Natural killer cell (primary cell): ENCODE measurements at regions of chr20 and their contacts with region 1.

Region 1: DNA sequence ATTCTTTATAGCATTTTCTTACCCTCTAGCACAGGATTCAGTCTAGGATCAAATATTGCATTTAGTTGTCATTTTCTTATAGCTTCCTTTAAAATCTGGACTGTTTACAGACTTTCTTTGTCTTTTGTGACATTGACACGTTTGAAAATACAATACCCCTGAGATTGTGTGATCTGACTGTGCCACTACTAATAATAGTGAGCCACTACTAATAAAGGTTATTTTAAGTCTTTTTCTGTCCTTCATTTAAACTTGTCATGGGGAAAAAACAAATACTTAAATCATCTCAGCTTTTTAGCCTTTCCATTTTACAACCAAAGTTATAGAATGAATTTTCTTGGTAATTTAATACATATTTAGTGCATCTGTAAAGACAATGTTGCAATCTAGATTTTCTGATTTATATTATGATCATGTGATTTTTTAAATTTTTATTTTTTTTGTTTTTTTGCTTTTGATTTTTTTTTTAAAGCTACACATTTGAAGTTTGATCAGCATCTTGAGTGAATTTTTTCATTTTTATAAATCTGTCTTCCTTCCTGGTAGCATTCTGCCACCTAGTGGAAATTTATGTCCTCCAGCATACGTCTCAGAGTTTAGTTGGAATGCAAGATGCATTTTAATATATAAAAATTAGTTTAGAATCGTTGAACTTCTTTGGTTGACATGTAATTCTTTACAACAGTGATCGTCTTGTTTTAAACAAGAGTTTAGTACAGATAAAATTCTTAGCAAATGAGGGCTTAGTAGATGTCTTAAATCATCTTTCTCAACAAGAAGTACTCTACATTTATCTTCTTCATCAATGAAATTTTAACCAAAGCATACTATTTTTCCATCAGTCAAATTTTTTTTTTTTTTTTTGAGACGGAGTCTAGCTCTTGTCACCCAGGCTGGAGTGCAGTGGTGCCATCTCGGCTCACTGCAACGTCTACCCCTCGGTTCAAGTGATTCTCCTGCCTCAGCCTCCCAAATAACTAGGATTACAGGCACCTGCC is 119.4 kb downstream of the NCOA3 start:
- DNase-seq: peak in 1 of 2 donors; percentile 73
- ATAC-seq: peak in 2 of 3 donors; percentile 44 to 45
- H3K4me3 ChIP-seq: no peak overlapping the region
- H3K4me3 Mint-ChIP-seq: no peak overlapping the region
- H3K27ac ChIP-seq: no peak overlapping the region
- H3K27ac Mint-ChIP-seq: peak overlapping the region; percentile 2 to 51
- H3K4me1 ChIP-seq: no peaks in the 10 kb centered on the region
- H3K4me1 Mint-ChIP-seq: peaks cover 7 to 11% of the 10 kb centered on the region in 2 donors
- H3K27me3 ChIP-seq: no peaks in the 10 kb centered on the region
- H3K27me3 Mint-ChIP-seq: no peaks in the 10 kb centered on the region
- CTCF ChIP-seq: peak; percentile 81

Region 2: DNA sequence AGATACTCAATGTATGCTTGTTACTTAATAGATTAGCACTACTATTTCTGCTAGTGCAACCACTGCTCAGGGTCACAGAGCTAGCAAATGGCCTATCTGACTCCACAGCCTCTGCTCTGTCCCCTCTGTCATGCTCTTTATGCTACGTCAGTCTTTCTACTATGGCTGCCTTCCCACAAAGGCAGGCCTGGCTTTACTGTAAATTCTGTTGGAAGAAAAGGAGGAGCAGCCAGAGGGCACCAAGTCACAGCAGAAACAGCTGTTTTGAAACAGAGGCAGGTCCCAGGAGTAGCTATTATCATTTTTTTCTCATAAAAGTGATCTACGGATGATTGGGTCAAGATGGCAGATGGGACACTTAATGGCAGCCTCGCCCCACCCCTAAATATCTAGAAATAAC is 1204.7 kb before region 1 on chr20:
- intact Hi-C with region 1: no loop called
- DNase-seq: no peak
- ATAC-seq: no peak
- H3K4me3 ChIP-seq: no peak overlapping the region
- H3K4me3 Mint-ChIP-seq: no peak overlapping the region
- H3K27ac ChIP-seq: no peak overlapping the region
- H3K27ac Mint-ChIP-seq: no peak overlapping the region
- H3K4me1 ChIP-seq: no peaks in the 10 kb centered on the region
- H3K4me1 Mint-ChIP-seq: no peaks in the 10 kb centered on the region
- H3K27me3 ChIP-seq: no peaks in the 10 kb centered on the region
- H3K27me3 Mint-ChIP-seq: peaks cover 7 to 21% of the 10 kb centered on the region in 2 donors
- CTCF ChIP-seq: no peak

Region 3: GRCh38 chr20:47196091-47197081 is 424.7 kb before region 1 on chr20:
- intact Hi-C with region 1: loop called (anchors 1 kb)
- DNase-seq: peak; percentile 31 to 82
- ATAC-seq: peak; percentile 87 to 96 (median 89)
- H3K4me3 ChIP-seq: no peak overlapping the region
- H3K4me3 Mint-ChIP-seq: no peak overlapping the region
- H3K27ac ChIP-seq: no peak overlapping the region
- H3K27ac Mint-ChIP-seq: no peak overlapping the region
- H3K4me1 ChIP-seq: peaks cover 4% of the 10 kb centered on the region
- H3K4me1 Mint-ChIP-seq: peaks cover 11% of the 10 kb centered on the region in 2 donors
- H3K27me3 ChIP-seq: no peaks in the 10 kb centered on the region
- H3K27me3 Mint-ChIP-seq: peaks cover 0 to 4% of the 10 kb centered on the region in 2 donors
- CTCF ChIP-seq: peak; percentile 95

Region 4: GRCh38 chr20:47272893-47273590 is 348.1 kb before region 1 on chr20:
- intact Hi-C with region 1: loop called (anchors 1 kb)
- DNase-seq: peak in 1 of 2 donors; percentile 83
- ATAC-seq: peak; percentile 83 to 88 (median 84)
- H3K4me3 ChIP-seq: no peak overlapping the region
- H3K4me3 Mint-ChIP-seq: no peak overlapping the region
- H3K27ac ChIP-seq: no peak overlapping the region
- H3K27ac Mint-ChIP-seq: peak overlapping the region; percentile 46 to 50
- H3K4me1 ChIP-seq: no peaks in the 10 kb centered on the region
- H3K4me1 Mint-ChIP-seq: peaks cover 13 to 15% of the 10 kb centered on the region in 2 donors
- H3K27me3 ChIP-seq: no peaks in the 10 kb centered on the region
- H3K27me3 Mint-ChIP-seq: no peaks in the 10 kb centered on the region
- CTCF ChIP-seq: peak; percentile 98

Region 5: GRCh38 chr20:47379433-47380150 is 241.5 kb before region 1 on chr20:
- intact Hi-C with region 1: loop called (anchors 1 kb)
- DNase-seq: no peak
- ATAC-seq: no peak
- H3K4me3 ChIP-seq: no peak overlapping the region
- H3K4me3 Mint-ChIP-seq: no peak overlapping the region
- H3K27ac ChIP-seq: no peak overlapping the region
- H3K27ac Mint-ChIP-seq: no peak overlapping the region
- H3K4me1 ChIP-seq: peaks cover 7% of the 10 kb centered on the region
- H3K4me1 Mint-ChIP-seq: peaks cover 0 to 6% of the 10 kb centered on the region in 2 donors
- H3K27me3 ChIP-seq: no peaks in the 10 kb centered on the region
- H3K27me3 Mint-ChIP-seq: peaks cover 0 to 2% of the 10 kb centered on the region in 2 donors
- CTCF ChIP-seq: no peak

Region 6: DNA sequence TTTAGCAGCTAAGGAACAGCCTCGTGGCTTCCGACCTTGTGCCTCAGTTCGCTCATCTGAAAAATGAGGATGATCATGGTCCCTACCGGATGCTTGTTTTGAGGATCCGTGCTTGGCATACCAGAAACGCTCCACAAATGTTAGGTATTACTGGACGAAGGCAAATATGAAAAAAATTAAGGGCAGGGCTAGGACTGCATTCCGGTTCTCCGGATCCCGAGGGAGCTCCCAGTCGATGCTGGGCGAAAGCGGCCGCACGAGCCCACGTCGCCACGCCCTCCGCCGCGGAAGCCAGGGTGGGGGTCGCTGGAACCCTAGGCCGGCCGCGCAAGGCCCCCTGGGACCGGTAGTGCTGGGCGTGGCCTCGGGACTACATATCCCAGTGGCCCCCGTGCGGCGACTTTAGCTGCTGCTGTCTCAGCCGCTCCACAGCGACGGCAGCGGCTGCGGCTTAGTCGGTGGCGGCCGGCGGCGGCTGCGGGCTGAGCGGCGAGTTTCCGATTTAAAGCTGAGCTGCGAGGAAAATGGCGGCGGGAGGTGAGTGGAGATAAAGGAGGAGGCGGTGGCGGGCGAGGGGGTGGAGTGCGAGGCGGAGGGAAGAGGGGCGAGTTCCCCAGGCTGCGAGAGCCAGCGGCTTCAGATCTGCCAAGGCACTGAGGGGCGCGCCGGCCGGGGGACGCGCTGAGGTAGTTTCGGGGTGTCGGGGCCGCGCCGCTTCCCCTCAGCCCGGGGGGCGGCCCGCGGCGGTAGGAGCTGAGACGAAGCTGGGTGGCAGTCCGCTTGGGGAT is 119.4 kb before region 1 on chr20 and contains the start of gene NCOA3:
- intact Hi-C with region 1: loop called (anchors 5 kb)
- DNase-seq: peak; percentile 84 to 91
- ATAC-seq: peak; percentile 83 to 88 (median 86)
- H3K4me3 ChIP-seq: peak within 1 kb of the TSS; percentile 97
- H3K4me3 Mint-ChIP-seq: peak within 1 kb of the TSS; percentile 98
- H3K27ac ChIP-seq: peak within 1 kb of the TSS; percentile 81
- H3K27ac Mint-ChIP-seq: peak within 1 kb of the TSS; percentile 91 to 98
- H3K4me1 ChIP-seq: peaks cover 9% of the 10 kb centered on the region
- H3K4me1 Mint-ChIP-seq: peaks cover 29 to 35% of the 10 kb centered on the region in 2 donors
- H3K27me3 ChIP-seq: no peaks in the 10 kb centered on the region
- H3K27me3 Mint-ChIP-seq: no peaks in the 10 kb centered on the region
- CTCF ChIP-seq: peak; percentile 32
- total RNA-seq, gene NCOA3: 44.3 to 63.3 (median 57.8) TPM